ENCODE measurements at regions of chr15 and their contacts with region 1.

Region 1: GRCh38 chr15:52730173-52730572 is 51.0 kb upstream of the ATOSA start:
- DNase-seq: peak in 1 of 3 donors; percentile 15
- ATAC-seq: peak; percentile 83
- H3K4me3 ChIP-seq: no peak overlapping the region
- H3K4me1 ChIP-seq: peaks cover 8% of the 10 kb centered on the region
- CTCF ChIP-seq: no peak

Region 2: GRCh38 chr15:52256366-52256765 is 473.8 kb before region 1 on chr15:
- intact Hi-C with region 1: loop called (anchors 5 to 10 kb)
- DNase-seq: peak; percentile 59 to 86 (median 66)
- ATAC-seq: peak; percentile 86
- H3K4me3 ChIP-seq: no peak overlapping the region
- H3K4me1 ChIP-seq: no peaks in the 10 kb centered on the region
- CTCF ChIP-seq: no peak

Region 3: GRCh38 chr15:52568601-52569256 is 161.4 kb before region 1 on chr15 and contains the start of gene ARPP19:
- intact Hi-C with region 1: no loop called
- DNase-seq: peak; percentile 92 to 95 (median 93)
- ATAC-seq: peak; percentile 92
- H3K4me3 ChIP-seq: peak within 1 kb of the TSS; percentile 56
- H3K4me1 ChIP-seq: peaks cover 11% of the 10 kb centered on the region
- CTCF ChIP-seq: no peak
- total RNA-seq, gene ARPP19: 64.5 to 201 (median 108) TPM